ENCODE measurements at regions of chr3 and their contacts with region 1.

Region 1: GRCh38 chr3:45499529-45499928 is 95.0 kb upstream of the LIMD1 start:
- DNase-seq: peak; percentile 30
- H3K4me3 ChIP-seq: no peak overlapping the region
- H3K27ac ChIP-seq: no peak overlapping the region
- H3K4me1 ChIP-seq: no peaks in the 10 kb centered on the region
- H3K27me3 ChIP-seq: no peaks in the 10 kb centered on the region
- CTCF ChIP-seq: peak; percentile 51 to 53

Region 2: GRCh38 chr3:45043728-45044299 is 455.7 kb before region 1 on chr3:
- CTCF ChIA-PET with region 1: no interaction called
- dilution Hi-C with region 1: loop called (anchors 5 kb)
- in situ Hi-C with region 1: loop called (anchors 5 kb)
- intact Hi-C with region 1: loop called (anchors 1 kb)
- DNase-seq: peak; percentile 68
- H3K4me3 ChIP-seq: no peak overlapping the region
- H3K27ac ChIP-seq: no peak overlapping the region
- H3K4me1 ChIP-seq: peaks cover 13% of the 10 kb centered on the region
- H3K27me3 ChIP-seq: no peaks in the 10 kb centered on the region
- CTCF ChIP-seq: peak in 1 of 2 donors; percentile 19

Region 3: DNA sequence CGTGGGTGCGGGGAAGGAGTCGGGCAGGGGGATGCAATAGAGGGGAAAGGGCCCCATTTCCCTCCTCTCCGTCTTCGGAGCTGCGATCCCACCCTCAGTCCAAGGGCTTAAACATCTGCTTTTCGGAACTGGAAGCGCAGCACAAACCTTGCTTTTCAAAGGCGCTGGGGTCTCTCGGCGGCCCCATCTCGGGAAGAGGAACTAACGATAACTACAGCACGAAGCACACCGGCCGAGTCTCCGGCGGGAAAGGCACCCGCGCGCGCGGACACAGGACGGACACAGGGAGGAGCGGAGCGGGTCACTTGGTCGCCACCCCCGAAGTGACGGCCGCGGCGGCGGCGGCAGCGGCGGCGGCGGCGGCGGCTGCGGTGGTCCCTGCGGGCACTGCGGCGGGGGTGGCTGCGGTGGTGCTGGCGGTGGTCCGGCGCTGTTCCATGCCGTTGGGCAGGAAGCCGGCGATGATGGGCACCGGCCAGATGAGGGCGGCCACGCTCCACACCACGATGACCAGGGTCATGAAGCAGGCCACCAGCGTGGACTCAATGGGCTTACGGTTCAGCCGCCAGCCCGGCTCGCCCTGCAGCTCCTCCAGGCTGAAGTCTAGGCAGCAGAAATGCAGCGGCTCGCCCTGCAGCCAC is 274.6 kb before region 1 on chr3:
- CTCF ChIA-PET with region 1: no interaction called
- dilution Hi-C with region 1: no loop called
- in situ Hi-C with region 1: loop called in 1 of 2 experiments (anchors 10 kb)
- intact Hi-C with region 1: loop called (anchors 1 kb)
- DNase-seq: peak; percentile 55
- H3K4me3 ChIP-seq: peak overlapping the region; percentile 37 to 69 (median 58)
- H3K27ac ChIP-seq: no peak overlapping the region
- H3K4me1 ChIP-seq: peaks cover 12% of the 10 kb centered on the region
- H3K27me3 ChIP-seq: no peaks in the 10 kb centered on the region
- CTCF ChIP-seq: peak; percentile 36 to 61

Region 4: DNA sequence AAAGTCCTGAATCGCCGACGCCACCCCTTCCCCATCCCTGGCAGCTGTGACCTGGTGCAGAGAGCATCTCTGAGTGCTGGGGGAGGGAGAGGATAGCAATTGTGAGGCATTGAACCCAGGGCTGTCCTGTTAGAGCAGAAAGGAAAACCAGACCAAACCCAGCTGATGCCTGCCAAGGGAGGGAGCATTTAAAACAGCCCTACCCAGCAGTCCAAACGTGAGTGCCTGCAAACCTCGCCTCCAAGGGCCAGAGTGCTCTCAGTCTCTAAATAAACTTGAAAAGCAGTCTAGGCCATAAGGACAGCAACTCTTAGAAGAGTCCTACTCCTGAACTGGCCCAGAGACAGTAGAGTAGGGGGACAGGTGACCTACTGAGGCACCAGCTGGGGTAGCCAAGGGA is 131.1 kb before region 1 on chr3:
- CTCF ChIA-PET with region 1: no interaction called
- dilution Hi-C with region 1: no loop called
- in situ Hi-C with region 1: no loop called
- intact Hi-C with region 1: no loop called
- DNase-seq: no peak
- H3K4me3 ChIP-seq: no peak overlapping the region
- H3K27ac ChIP-seq: no peak overlapping the region
- H3K4me1 ChIP-seq: no peaks in the 10 kb centered on the region
- H3K27me3 ChIP-seq: no peaks in the 10 kb centered on the region
- CTCF ChIP-seq: no peak

Measured in mammary epithelial cell (primary cell).